ENCODE measurements at regions of chr14 and their contacts with region 1.

Region 1: DNA sequence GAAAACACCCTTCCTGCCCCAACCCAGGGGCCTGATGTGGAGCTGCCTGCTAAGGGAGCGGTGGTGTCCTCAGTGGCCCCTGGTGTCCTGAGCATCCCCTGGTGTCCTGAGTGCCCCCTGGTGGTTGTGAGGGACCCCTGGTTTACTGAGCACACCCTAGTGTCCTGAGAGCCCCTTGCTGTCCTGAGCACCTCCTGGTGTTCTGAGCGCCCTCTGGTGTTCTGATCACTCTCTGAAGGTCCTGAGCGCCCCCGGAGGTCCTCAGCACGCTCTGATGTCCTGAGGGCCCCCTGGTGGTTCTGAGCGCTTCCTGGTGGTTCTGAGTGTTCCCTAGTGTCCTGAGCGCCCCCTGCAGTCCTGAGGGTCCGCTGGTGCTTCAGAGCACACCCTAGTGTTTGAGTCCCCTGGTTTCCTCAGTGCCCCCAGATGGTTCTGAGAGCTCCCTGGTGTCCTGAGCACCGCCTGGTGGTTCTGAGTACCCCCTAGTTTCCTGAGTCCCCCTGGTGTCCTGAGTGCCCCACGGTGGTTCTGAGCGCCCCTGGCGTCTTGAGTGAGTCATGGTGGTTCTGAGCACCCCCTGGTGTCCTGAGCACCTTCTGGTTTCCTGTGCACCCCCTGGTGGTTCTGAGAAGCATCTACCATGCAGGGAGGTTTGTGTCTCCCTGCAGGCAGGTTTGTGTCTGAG is 1004.2 kb downstream of the TMEM121 start:
- DNase-seq: peak; percentile 25
- CTCF ChIP-seq: peak; percentile 81

Region 2: DNA sequence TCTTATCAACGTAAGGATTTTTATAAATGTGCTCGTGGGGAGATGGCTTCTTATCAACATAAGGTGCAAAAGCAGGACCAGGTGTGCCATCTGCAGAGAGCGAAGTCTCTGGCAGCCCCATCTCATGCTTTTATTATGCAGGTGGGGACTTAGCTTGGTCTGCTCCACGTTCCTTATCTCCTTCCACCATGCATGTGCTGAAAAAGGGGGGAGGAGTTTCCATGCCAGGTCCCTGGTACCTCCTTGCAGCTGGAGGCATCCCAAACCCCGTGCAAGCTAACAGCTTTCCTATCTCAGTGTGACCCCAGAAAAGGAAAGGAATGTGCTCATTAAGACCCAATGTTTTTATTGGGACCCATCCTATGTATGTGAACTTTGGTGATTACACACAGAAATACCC is 395.7 kb before region 1 on chr14:
- CTCF ChIA-PET with region 1: no interaction called
- POLR2A ChIA-PET with region 1: no interaction called
- DNase-seq: no peak
- CTCF ChIP-seq: no peak

Region 3: DNA sequence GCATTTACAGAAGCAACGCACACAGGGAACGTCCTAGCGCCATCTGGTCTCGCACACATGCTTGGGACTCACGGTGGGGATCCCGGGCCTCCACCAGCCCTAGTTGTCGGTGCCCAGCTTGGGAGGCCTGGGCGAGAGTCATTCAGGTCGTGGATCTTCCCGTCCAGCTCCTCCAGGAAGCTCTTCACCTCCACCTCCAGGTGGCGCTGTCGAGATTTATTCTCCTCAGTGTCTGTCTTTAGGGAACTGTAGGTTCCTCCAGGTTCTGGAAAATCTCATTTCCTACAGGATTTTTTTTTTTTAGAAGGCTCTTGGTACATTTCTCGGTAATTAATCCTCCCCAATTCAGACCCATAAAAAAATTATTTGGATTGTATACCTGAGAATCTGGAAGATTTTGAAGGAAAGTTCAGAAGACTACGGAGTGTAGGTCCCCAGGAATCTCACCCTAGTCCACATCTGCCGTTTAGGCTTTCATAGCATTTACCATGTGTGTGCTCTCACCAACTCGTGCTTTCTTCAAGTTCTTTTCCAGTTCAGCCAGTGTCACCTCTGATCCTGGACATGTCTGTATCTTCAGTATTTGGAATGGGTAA is 94.2 kb before region 1 on chr14:
- CTCF ChIA-PET with region 1: interaction called, 44 read pairs
- POLR2A ChIA-PET with region 1: no interaction called
- DNase-seq: peak; percentile 6
- CTCF ChIP-seq: peak; percentile 65

Region 4: GRCh38 chr14:106491851-106492250 is 38.7 kb before region 1 on chr14:
- CTCF ChIA-PET with region 1: interaction called, 38 read pairs
- POLR2A ChIA-PET with region 1: no interaction called
- DNase-seq: no peak
- CTCF ChIP-seq: peak; percentile 28

Region 5: GRCh38 chr14:106518054-106518943 is 12.3 kb before region 1 on chr14:
- CTCF ChIA-PET with region 1: interaction called, 150 read pairs
- POLR2A ChIA-PET with region 1: interaction called, 3 read pairs
- DNase-seq: peak; percentile 29
- CTCF ChIP-seq: peak; percentile 80

Region 6: GRCh38 chr14:106556665-106557289 is 26.2 kb after region 1 on chr14:
- CTCF ChIA-PET with region 1: interaction called, 235 read pairs
- POLR2A ChIA-PET with region 1: no interaction called
- DNase-seq: peak; percentile 45
- CTCF ChIP-seq: peak; percentile 98

Region 7: DNA sequence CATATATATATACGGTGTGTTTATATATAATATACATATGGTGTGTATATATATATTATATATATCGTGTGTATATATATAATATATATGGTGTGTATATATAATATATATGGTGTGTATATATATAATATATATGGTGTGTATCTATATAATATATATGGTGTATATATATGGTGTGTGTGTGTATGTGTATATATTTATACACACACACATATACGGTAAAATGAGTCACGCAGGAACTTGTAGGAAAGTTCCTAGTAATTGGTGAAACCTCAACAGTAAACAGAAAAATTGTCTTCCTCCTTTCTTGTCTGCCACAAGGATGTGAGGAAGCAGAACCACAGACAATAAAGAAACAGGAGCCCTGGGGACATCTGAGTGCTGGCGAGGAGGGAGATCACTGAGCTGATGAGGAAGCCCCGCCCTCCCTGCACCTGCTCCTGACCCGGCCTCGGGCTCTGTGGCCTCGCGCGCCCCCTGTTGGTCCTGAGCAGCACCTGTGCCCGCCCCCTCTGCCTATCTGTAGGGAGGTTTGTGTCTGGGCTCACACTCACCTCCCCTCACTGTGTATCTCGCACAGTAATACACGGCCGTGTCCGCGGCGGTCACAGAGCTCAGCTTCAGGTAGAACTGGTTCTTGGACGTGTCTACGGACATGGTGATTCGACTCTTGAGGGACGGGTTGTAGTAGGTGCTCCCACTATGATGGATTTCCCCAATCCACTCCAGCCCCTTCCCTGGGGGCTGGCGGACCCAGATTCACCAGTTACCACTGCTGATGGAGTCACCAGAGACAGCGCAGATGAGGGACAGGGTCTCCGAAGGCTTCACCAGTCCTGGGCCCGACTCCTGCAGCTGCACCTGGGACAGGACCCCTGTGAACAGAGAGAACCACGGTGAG is 75.2 kb after region 1 on chr14:
- CTCF ChIA-PET with region 1: interaction called, 18 read pairs
- POLR2A ChIA-PET with region 1: no interaction called
- DNase-seq: peak; percentile 74
- CTCF ChIP-seq: peak; percentile 90

Region 8: GRCh38 chr14:106657460-106657859 is 126.9 kb after region 1 on chr14:
- CTCF ChIA-PET with region 1: interaction called, 12 read pairs
- POLR2A ChIA-PET with region 1: no interaction called
- DNase-seq: peak; percentile 22
- CTCF ChIP-seq: peak; percentile 75

Region 9: GRCh38 chr14:106788534-106788933 is 258.0 kb after region 1 on chr14:
- CTCF ChIA-PET with region 1: no interaction called
- POLR2A ChIA-PET with region 1: no interaction called
- DNase-seq: no peak
- CTCF ChIP-seq: no peak